ENCODE measurements at regions of chr4 and their contacts with region 1.

Region 1: DNA sequence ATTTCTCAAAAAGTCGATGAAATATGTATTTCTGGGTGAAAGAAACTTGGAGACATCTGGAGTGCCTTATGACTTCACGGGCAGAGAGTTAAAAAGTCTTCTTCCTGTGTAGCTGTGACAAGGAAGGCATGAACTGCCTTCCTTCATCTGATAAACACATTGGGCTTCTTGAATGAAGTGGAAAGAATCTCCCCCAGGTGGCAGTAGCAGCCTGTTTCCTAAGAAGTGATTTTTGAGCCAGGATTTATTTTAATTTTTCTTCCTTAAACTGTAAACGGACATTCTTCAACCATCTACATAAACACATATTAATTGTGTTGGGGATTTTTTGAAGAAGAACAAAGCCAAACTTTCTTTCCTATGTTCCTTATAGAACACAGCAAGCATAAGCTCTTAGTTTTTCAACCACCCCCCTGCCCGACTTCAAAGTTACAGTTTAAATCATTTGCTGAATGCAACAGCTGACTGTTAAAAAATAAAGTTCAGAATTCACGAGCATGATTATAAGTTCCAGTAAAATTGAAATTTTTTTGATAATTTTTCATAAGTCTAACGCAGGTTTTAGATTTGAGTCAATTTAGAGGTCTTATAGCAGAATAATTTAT is 980 bp upstream of the GIMD1 start:
- DNase-seq: peak; percentile 73
- ATAC-seq: peak; percentile 56
- H3K4me3 ChIP-seq: no peak overlapping the region
- H3K27ac ChIP-seq: no peak overlapping the region
- H3K4me1 ChIP-seq: peaks cover 8% of the 10 kb centered on the region
- H3K27me3 ChIP-seq: no peaks in the 10 kb centered on the region
- CTCF ChIP-seq: peak; percentile 79

Region 2: DNA sequence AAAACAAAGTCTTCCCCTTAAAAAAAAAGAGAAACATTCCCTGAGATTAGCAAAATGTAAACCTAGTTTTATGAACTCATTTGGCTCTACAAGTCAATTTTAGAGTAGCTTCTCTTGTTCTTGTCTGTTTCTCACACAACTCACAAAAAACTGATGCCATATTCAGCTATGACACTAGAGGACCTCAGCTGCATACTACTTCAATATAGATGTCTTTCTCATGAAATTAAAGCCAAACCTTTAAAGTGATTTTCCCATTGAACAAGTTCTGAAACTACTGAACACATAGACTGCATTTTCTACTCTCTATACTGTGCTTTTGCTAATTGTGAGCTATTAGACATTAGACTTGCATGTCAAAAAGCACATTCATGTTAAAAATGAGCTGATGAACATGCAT is 103.4 kb before region 1 on chr4:
- CTCF ChIA-PET with region 1: no interaction called
- POLR2A ChIA-PET with region 1: no interaction called
- intact Hi-C with region 1: loop called (anchors 5 kb)
- DNase-seq: peak; percentile 55
- ATAC-seq: peak; percentile 38; the same call in 1 of the 2 replicates
- H3K4me3 ChIP-seq: no peak overlapping the region
- H3K27ac ChIP-seq: no peak overlapping the region
- H3K4me1 ChIP-seq: no peaks in the 10 kb centered on the region
- H3K27me3 ChIP-seq: no peaks in the 10 kb centered on the region
- CTCF ChIP-seq: peak; percentile 80

Region 3: DNA sequence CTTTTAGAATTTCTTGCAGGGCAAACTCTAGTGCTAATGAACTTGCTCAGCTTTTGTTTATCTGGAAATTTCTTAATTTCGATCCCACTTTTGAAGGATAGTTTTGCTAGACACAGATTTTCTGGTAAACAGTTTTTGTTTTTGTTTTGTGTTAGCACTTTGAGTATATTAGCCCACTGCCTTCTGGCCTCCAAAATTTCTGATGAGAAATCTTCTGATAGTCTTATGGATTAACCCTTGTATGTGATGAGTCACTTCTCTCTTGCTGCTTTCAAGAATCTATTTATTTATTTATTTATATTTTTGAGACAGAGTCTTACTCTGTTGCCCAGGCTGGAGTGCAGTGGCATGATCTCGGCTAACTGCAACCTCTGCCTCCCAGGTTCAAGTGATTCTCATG is 26.0 kb after region 1 on chr4:
- CTCF ChIA-PET with region 1: no interaction called
- POLR2A ChIA-PET with region 1: no interaction called
- intact Hi-C with region 1: no loop called
- DNase-seq: no peak
- ATAC-seq: no peak
- H3K4me3 ChIP-seq: no peak overlapping the region
- H3K27ac ChIP-seq: no peak overlapping the region
- H3K4me1 ChIP-seq: no peaks in the 10 kb centered on the region
- H3K27me3 ChIP-seq: no peaks in the 10 kb centered on the region
- CTCF ChIP-seq: no peak

Region 4: DNA sequence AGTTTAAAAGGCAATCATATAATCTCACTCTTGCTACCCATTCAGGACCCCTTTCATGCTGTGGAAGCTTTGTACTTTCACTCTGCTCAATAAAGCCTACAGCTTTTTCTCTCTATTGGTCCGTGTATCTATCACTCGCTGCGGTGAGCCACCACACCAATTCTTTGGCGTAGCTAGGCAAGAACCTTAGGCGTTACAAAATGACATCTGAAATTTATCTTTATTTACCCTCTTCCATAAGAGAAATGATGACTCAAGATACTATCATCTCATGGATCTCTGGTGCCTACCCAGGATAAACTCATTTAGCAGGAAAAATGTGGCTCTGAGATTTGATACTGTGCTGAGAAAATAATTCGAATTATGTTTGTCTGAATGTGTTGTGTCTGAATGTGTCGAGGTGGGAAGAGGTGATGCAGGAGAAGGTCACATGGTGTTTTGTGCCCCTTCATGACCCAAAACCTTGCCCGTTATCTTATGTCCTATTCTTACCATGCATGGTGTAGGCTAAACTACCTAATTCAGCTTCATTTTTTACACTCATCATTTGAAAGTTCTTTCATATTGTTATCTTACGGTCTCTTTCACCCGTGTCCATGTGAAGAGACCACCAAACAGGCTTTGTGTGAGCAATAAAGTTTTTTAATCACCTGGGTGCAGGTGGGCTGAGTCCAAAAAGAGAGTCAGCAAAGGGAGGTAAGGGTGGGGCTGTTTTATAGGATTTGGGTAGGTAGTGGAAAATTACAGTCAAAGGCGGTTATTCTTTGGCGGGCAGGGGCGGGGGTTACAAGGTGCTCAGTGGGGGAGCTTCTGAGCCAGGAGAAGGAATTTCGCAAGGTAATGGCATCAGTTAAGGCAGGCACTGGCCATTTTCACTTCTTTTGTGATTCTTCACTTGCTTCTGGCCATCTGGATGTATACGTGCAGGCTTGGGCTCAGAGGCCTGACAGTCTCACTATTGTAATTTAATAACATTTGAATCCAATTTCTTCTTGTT is 40.6 kb after region 1 on chr4:
- CTCF ChIA-PET with region 1: no interaction called
- POLR2A ChIA-PET with region 1: no interaction called
- intact Hi-C with region 1: loop called (anchors 5 kb)
- DNase-seq: peak; percentile 84
- ATAC-seq: peak; percentile 80
- H3K4me3 ChIP-seq: peak overlapping the region; percentile 63
- H3K27ac ChIP-seq: peak overlapping the region; percentile 94
- H3K4me1 ChIP-seq: peaks cover 31% of the 10 kb centered on the region
- H3K27me3 ChIP-seq: no peaks in the 10 kb centered on the region
- CTCF ChIP-seq: no peak

Region 5: GRCh38 chr4:106502106-106502699 is 132.6 kb after region 1 on chr4:
- CTCF ChIA-PET with region 1: no interaction called
- POLR2A ChIA-PET with region 1: no interaction called
- intact Hi-C with region 1: loop called (anchors 1 kb)
- DNase-seq: peak; percentile 77
- ATAC-seq: peak; percentile 74
- H3K4me3 ChIP-seq: no peak overlapping the region
- H3K27ac ChIP-seq: no peak overlapping the region
- H3K4me1 ChIP-seq: no peaks in the 10 kb centered on the region
- H3K27me3 ChIP-seq: no peaks in the 10 kb centered on the region
- CTCF ChIP-seq: peak; percentile 80

Region 6: GRCh38 chr4:106708464-106708816 is 338.9 kb after region 1 on chr4:
- CTCF ChIA-PET with region 1: no interaction called
- POLR2A ChIA-PET with region 1: interaction called, 10 read pairs
- intact Hi-C with region 1: no loop called
- DNase-seq: no peak
- ATAC-seq: peak; percentile 18; the same call in 1 of the 2 replicates
- H3K4me3 ChIP-seq: no peak overlapping the region
- H3K27ac ChIP-seq: no peak overlapping the region
- H3K4me1 ChIP-seq: peaks cover 8% of the 10 kb centered on the region; the same call in 1 of the 2 replicates
- H3K27me3 ChIP-seq: no peaks in the 10 kb centered on the region
- CTCF ChIP-seq: no peak

Region 7: GRCh38 chr4:106898621-106899230 is 529.2 kb after region 1 on chr4:
- CTCF ChIA-PET with region 1: no interaction called
- POLR2A ChIA-PET with region 1: no interaction called
- intact Hi-C with region 1: loop called (anchors 2 kb)
- DNase-seq: peak; percentile 68
- ATAC-seq: peak; percentile 81
- H3K4me3 ChIP-seq: no peak overlapping the region
- H3K27ac ChIP-seq: no peak overlapping the region
- H3K4me1 ChIP-seq: no peaks in the 10 kb centered on the region
- H3K27me3 ChIP-seq: no peaks in the 10 kb centered on the region
- CTCF ChIP-seq: peak; percentile 81

Measured in PC-3 (cell line).